ENCODE measurements at regions of chr18 and their contacts with region 1.

Region 1: DNA sequence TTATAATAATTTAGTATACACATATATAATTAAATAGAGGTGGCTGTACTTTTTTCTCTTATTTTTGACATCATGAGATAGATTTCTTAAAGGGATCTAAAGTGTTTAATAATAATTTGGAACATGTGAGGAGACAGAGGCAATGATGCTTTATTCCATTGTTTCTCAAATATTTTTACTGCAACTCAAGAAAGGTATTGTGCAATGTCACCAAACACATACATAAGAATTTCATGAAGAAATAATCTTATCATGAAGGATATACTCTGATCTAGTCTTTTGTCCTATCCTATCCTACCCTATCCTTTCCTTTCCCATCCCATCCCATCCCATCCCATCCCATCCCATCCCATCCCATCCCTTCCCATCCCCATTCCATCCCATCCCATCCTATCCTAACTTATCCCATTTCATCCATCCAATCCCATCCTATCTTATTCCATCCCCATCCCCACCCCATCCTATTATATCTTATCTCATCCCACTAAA is 232.1 kb upstream of the SMIM21 start:
- DNase-seq: no peak
- H3K4me3 Mint-ChIP-seq: no peak overlapping the region
- H3K27ac Mint-ChIP-seq: no peak overlapping the region
- H3K4me1 Mint-ChIP-seq: no peaks in the 10 kb centered on the region
- H3K27me3 Mint-ChIP-seq: no peaks in the 10 kb centered on the region

Region 2: DNA sequence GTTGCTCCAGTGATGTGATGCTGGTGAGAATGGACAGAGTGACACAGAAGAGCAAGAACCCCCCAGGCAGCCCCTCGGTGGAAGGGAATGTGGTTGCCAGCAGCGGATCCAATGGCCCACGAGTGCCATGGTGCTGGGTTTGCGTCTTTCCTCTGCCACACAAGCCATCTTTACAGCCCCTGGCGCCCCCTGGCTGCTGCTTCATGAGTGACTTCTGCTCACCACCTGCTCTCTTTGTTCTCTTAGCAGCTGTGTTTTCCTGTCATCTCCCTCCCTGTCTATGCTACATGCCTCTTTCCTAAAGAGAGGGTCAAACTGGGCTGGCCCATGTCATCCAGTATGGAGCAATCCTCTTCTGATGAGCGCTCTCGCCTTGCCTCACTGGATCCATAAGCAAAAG is 67.9 kb after region 1 on chr18:
- intact Hi-C with region 1: loop called (anchors 10 kb)
- DNase-seq: no peak
- H3K4me3 Mint-ChIP-seq: no peak overlapping the region
- H3K27ac Mint-ChIP-seq: no peak overlapping the region
- H3K4me1 Mint-ChIP-seq: no peaks in the 10 kb centered on the region
- H3K27me3 Mint-ChIP-seq: no peaks in the 10 kb centered on the region

Region 3: GRCh38 chr18:76450452-76451395 is 791.1 kb after region 1 on chr18:
- intact Hi-C with region 1: no loop called
- DNase-seq: no peak
- H3K4me3 Mint-ChIP-seq: peak overlapping the region; percentile 80
- H3K27ac Mint-ChIP-seq: no peak overlapping the region
- H3K4me1 Mint-ChIP-seq: peaks cover 16% of the 10 kb centered on the region
- H3K27me3 Mint-ChIP-seq: peaks cover 39% of the 10 kb centered on the region